ENCODE measurements at regions of chr12 and their contacts with region 1.

Region 1: DNA sequence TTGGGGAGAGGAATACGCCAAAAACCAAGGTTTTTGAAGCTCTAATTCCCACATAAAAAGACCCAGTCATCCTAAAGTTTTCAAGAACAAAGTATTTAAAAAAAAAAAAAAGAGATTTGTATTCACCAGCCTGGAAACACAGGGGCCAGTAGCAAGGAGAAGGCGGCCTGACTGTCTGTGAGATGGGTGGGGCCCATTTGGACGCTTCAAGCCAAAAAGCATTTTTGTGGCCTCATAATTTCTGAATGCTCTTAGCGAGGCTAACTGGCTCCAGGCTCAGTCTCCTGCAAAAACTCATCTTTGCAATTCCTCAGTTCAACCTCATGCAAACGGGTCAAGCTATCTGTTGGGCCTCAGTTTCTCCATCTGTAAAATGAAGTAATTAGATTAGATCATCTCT is 514.1 kb downstream of the MED13L start:
- DNase-seq: no peak

Region 2: GRCh38 chr12:115916910-115917668 is 153.7 kb after region 1 on chr12:
- intact Hi-C with region 1: loop called in 1 of 2 experiments (anchors 10 kb)
- DNase-seq: peak; percentile 86